GM12878 (cell line): ENCODE measurements at regions of chr4 and their contacts with region 1.

Region 1: DNA sequence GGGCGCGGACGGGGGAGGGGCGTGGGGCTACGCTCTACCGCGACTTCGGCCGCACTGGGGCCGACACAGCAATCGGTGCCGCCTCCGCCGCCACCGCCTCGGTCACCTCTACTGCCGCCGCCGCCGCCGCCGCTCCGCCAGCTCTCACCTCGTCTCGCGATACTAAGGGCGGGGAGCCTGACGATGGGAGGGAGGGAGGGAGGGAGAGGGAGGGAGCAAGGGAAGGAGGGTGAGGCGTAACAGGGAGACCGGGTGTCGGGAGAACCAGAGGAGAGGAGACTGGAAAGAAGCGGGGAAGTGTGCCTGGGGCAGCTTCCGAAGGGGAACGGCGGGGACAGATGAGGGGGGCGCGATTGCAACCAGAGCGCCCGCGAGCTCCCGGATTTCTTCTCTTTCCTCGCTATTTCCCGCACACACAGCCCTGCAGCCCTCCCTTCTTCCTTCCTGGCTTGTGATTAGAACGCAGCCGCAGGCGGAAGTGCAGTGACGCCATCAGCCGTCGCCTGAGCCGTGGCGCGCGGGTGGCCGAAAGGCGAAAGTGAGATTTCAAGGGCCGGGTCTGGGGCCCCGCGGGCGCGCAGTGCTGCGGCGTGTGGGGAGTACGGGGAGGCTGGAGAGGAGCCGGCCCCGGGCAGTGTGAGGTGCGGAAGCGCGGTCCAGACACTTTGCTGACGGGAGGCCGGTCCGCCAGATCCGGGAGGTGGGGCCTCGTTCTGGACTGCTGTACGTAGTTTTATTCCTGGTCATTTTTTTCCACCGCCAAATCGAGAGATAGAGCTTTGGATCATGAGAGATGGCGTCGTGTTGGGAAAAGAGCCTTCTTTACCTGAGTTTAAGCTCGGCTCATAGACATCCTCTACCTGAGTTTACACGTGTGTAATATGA is at the start of gene ANKRD17:
- DNase-seq: peak; percentile 79
- ATAC-seq: peak; percentile 87
- H3K4me3 ChIP-seq: peak within 1 kb of the TSS; percentile 87
- H3K27ac ChIP-seq: peak within 1 kb of the TSS; percentile 95
- H3K4me1 ChIP-seq: no peaks in the 10 kb centered on the region
- H3K27me3 ChIP-seq: no peaks in the 10 kb centered on the region
- CTCF ChIP-seq: no peak
- EP300 ChIP-seq: no peak
- POLR2A ChIP-seq: peak; percentile 87
- RAD21 ChIP-seq: no peak
- polyA plus RNA-seq, gene ANKRD17: 11.7 to 18.5 TPM

Region 2: GRCh38 chr4:73086095-73086868 is 172.6 kb before region 1 on chr4:
- CTCF ChIA-PET with region 1: interaction called, 6 read pairs
- POLR2A ChIA-PET with region 1: interaction called, 4 read pairs
- RAD21 ChIA-PET with region 1: no interaction called
- SMC1A ChIA-PET with region 1: interaction called, 10 read pairs
- in situ Hi-C with region 1: no loop called
- intact Hi-C with region 1: loop called (anchors 5 kb)
- DNase-seq: no peak
- ATAC-seq: no peak
- H3K4me3 ChIP-seq: no peak overlapping the region
- H3K27ac ChIP-seq: 0 out of 2 replicates have a peak overlapping the region, but pooled peaks have one; percentile 18
- H3K4me1 ChIP-seq: no peaks in the 10 kb centered on the region
- H3K27me3 ChIP-seq: no peaks in the 10 kb centered on the region
- CTCF ChIP-seq: no peak
- EP300 ChIP-seq: no peak
- POLR2A ChIP-seq: no peak
- RAD21 ChIP-seq: no peak

Region 3: DNA sequence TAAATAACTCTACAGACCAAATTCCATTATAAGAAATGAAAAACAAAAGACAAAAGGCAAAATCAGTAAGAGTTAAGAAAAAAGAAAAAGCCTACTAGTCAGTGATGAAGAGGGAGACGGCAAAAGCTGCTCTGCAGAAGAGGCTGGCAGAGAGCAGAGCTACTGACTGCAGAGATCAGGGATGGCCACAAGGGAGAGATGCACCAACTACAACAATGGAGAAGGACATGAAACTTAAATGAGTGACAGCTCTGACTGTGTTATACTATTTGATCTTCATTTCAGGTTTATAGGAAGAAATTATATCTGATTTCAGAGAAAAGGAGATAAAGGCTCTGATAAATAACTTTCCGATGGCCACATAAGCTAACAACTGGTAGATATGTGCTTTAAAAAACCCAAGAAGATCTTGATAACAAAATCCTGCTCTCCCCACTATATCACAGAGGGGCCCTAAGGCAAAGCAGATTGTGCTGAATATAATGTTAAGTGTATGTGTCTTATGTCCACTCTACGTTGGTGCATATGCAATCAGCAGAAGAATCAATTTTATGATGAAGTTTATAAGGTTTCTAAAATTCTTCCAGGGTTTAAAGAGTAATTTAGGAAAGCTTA is 131.0 kb before region 1 on chr4:
- CTCF ChIA-PET with region 1: interaction called, 51 read pairs
- POLR2A ChIA-PET with region 1: no interaction called
- RAD21 ChIA-PET with region 1: interaction called, 17 read pairs
- SMC1A ChIA-PET with region 1: interaction called, 14 read pairs
- in situ Hi-C with region 1: no loop called
- intact Hi-C with region 1: no loop called
- DNase-seq: no peak
- ATAC-seq: peak; percentile 79
- H3K4me3 ChIP-seq: no peak overlapping the region
- H3K27ac ChIP-seq: no peak overlapping the region
- H3K4me1 ChIP-seq: no peaks in the 10 kb centered on the region
- H3K27me3 ChIP-seq: no peaks in the 10 kb centered on the region
- CTCF ChIP-seq: peak; percentile 24 to 34 (median 25); a peak in 4 of 6 replicates
- EP300 ChIP-seq: no peak
- POLR2A ChIP-seq: no peak
- RAD21 ChIP-seq: 0 out of 2 replicates have a peak, but pooled peaks have one; percentile 31

Region 4: DNA sequence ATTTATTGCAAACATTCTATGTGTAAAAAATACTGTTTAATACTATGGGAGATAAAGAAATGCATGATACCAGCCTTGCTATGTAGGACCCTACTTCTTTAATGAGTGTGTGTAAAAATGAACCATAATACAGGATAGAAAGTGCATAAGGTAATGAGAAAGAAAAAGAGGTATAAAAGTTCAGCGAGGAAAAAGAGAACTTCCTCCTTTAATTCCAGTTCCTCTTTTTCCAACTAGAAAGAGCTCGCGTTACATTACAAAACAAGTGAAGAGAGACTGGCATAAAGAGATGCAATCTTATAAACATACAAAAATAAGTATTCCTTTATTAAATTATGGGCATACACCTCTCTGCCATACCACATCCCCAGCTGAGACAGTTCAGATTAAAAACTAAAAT is 77.7 kb before region 1 on chr4:
- CTCF ChIA-PET with region 1: interaction called, 10 read pairs
- POLR2A ChIA-PET with region 1: interaction called, 3 read pairs
- RAD21 ChIA-PET with region 1: no interaction called
- SMC1A ChIA-PET with region 1: interaction called, 6 read pairs
- in situ Hi-C with region 1: no loop called
- intact Hi-C with region 1: no loop called
- DNase-seq: no peak
- ATAC-seq: peak; percentile 64
- H3K4me3 ChIP-seq: no peak overlapping the region
- H3K27ac ChIP-seq: no peak overlapping the region
- H3K4me1 ChIP-seq: peaks cover 11% of the 10 kb centered on the region; the same call in 1 of the 2 replicates
- H3K27me3 ChIP-seq: no peaks in the 10 kb centered on the region
- CTCF ChIP-seq: no peak
- EP300 ChIP-seq: no peak
- POLR2A ChIP-seq: no peak
- RAD21 ChIP-seq: no peak

Region 5: GRCh38 chr4:73208376-73208775 is 50.6 kb before region 1 on chr4:
- CTCF ChIA-PET with region 1: interaction called, 10 read pairs
- POLR2A ChIA-PET with region 1: interaction called, 4 read pairs
- RAD21 ChIA-PET with region 1: no interaction called
- SMC1A ChIA-PET with region 1: interaction called, 4 read pairs
- in situ Hi-C with region 1: no loop called
- intact Hi-C with region 1: no loop called
- DNase-seq: no peak
- ATAC-seq: no peak
- H3K4me3 ChIP-seq: no peak overlapping the region
- H3K27ac ChIP-seq: no peak overlapping the region
- H3K4me1 ChIP-seq: no peaks in the 10 kb centered on the region
- H3K27me3 ChIP-seq: no peaks in the 10 kb centered on the region
- CTCF ChIP-seq: no peak
- EP300 ChIP-seq: no peak
- POLR2A ChIP-seq: no peak
- RAD21 ChIP-seq: no peak

Region 6: DNA sequence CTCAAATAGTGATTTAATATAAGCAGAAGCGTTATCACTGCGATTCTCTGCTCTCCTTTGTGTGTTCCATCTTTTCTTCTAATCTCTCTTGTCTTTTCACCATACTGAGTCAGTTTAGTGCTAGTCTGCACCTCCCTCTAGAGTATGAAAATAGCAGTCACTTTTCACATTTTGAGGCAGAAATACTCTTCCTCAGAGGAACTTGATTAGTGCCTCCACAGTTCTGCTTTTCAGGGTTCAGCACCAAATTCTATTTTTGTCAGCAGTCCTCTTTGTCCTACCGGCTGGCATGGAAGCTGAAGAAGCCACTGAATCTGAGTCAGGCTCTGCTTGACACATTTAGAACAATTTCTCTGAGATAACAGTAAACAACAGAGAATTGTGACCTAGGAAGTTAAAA is 49.4 kb after region 1 on chr4:
- CTCF ChIA-PET with region 1: interaction called, 6 read pairs
- POLR2A ChIA-PET with region 1: no interaction called
- RAD21 ChIA-PET with region 1: interaction called, 3 read pairs
- SMC1A ChIA-PET with region 1: interaction called, 3 read pairs
- in situ Hi-C with region 1: no loop called
- intact Hi-C with region 1: loop called (anchors 2 kb)
- DNase-seq: no peak
- ATAC-seq: peak; percentile 57
- H3K4me3 ChIP-seq: no peak overlapping the region
- H3K27ac ChIP-seq: no peak overlapping the region
- H3K4me1 ChIP-seq: no peaks in the 10 kb centered on the region
- H3K27me3 ChIP-seq: no peaks in the 10 kb centered on the region
- CTCF ChIP-seq: peak; percentile 29 to 54 (median 32); a peak in 4 of 6 replicates
- EP300 ChIP-seq: no peak
- POLR2A ChIP-seq: no peak
- RAD21 ChIP-seq: peak; percentile 78